HepG2 (cell line): ENCODE measurements at regions of chr17 and their contacts with region 1.

Region 1: GRCh38 chr17:17729620-17730249 is 48.5 kb downstream of the RAI1 start:
- DNase-seq: peak; percentile 30
- ATAC-seq: peak; percentile 91
- H3K4me3 ChIP-seq: no peak overlapping the region
- H3K27ac ChIP-seq: no peak overlapping the region
- H3K4me1 ChIP-seq: peaks cover 5% of the 10 kb centered on the region; the same call in 1 of the 2 replicates
- H3K27me3 ChIP-seq: no peaks in the 10 kb centered on the region
- CTCF ChIP-seq: peak; percentile 86
- EP300 ChIP-seq: no peak
- POLR2A ChIP-seq: no peak
- RAD21 ChIP-seq: 0 out of 2 replicates have a peak, but pooled peaks have one; percentile 52

Region 2: DNA sequence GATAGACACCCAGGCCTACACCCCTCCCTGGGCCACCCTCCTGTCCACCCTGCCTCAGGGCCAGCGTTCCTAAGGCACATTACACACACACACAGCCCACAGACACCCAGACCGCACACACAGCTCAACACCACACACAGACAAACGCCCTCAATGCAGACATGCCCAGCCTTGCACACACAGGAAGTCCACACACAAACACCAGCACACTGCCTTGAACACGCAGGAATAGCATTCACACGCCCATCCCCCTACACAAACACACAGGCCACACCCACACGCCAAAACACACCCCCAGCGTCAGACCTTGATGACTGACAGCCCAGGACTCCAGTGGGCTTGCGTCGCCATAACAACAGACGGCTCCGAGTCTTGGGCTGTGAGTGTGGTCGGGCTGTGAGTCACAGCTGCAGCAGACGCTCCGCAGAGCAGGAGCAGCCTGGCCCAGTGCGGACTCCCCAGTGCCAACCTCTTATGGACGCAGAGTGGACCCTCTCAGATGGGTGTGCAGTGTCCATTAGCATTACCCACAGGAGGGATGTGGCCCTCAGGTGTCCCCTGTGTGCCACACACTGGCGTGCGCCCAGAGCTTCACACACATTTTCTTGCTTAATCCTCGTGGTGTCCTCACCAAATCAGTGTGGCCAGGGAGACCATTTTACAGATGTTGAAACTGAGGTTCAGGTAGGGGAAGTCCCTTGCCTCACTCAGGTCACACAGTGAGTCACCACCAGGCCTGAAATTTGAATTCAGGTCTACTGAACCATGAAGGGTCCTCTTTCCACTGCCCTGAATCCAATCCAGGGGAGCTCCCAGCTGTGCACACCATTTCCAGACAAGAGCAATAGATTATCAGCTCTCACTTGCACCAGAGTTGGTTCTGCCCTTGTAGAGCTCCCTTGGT is 66.3 kb before region 1 on chr17:
- CTCF ChIA-PET with region 1: no interaction called
- POLR2A ChIA-PET with region 1: no interaction called
- in situ Hi-C with region 1: no loop called
- intact Hi-C with region 1: loop called (anchors 10 kb)
- DNase-seq: peak; percentile 82
- ATAC-seq: peak; percentile 65
- H3K4me3 ChIP-seq: peak overlapping the region in 1 of 3 experiments; percentile 39; a peak in 1 of 6 replicates
- H3K27ac ChIP-seq: no peak overlapping the region
- H3K4me1 ChIP-seq: peaks cover 71% of the 10 kb centered on the region
- H3K27me3 ChIP-seq: peaks cover 0 to 9% of the 10 kb centered on the region in 2 experiments; a peak in 1 of 5 replicates
- CTCF ChIP-seq: no peak
- EP300 ChIP-seq: no peak
- POLR2A ChIP-seq: no peak
- RAD21 ChIP-seq: no peak

Region 3: GRCh38 chr17:17741349-17742023 is 11.8 kb after region 1 on chr17:
- CTCF ChIA-PET with region 1: no interaction called
- POLR2A ChIA-PET with region 1: no interaction called
- in situ Hi-C with region 1: no loop called
- intact Hi-C with region 1: no loop called
- DNase-seq: no peak
- ATAC-seq: no peak
- H3K4me3 ChIP-seq: no peak overlapping the region
- H3K27ac ChIP-seq: no peak overlapping the region
- H3K4me1 ChIP-seq: peaks cover 20% of the 10 kb centered on the region
- H3K27me3 ChIP-seq: no peaks in the 10 kb centered on the region
- CTCF ChIP-seq: no peak
- EP300 ChIP-seq: no peak
- POLR2A ChIP-seq: no peak
- RAD21 ChIP-seq: no peak

Region 4: GRCh38 chr17:17774009-17774881 is 44.5 kb after region 1 on chr17:
- CTCF ChIA-PET with region 1: no interaction called
- POLR2A ChIA-PET with region 1: no interaction called
- in situ Hi-C with region 1: no loop called
- intact Hi-C with region 1: no loop called
- DNase-seq: no peak
- ATAC-seq: no peak
- H3K4me3 ChIP-seq: no peak overlapping the region
- H3K27ac ChIP-seq: no peak overlapping the region
- H3K4me1 ChIP-seq: peaks cover 25% of the 10 kb centered on the region
- H3K27me3 ChIP-seq: no peaks in the 10 kb centered on the region
- CTCF ChIP-seq: no peak
- EP300 ChIP-seq: no peak
- POLR2A ChIP-seq: no peak
- RAD21 ChIP-seq: no peak